Motor neuron (in vitro differentiated cells): ENCODE measurements at regions of chr1 and their contacts with region 1.

Region 1: GRCh38 chr1:175742790-175743459 is 470 bp downstream of the TNR start:
- ATAC-seq: peak; percentile 69 to 91 (median 89)
- H3K4me3 ChIP-seq: peak overlapping the region; percentile 11 to 38 (median 28)
- H3K27ac ChIP-seq: no peak overlapping the region
- H3K4me1 ChIP-seq: peaks cover 7 to 8% of the 10 kb centered on the region in 2 donors

Region 2: GRCh38 chr1:175481126-175482066 is 261.5 kb before region 1 on chr1:
- in situ Hi-C with region 1: loop called in 1 of 9 experiments (anchors 25 kb)
- ATAC-seq: peak in 4 of 8 experiments; percentile 32 to 58 (median 48)
- H3K4me3 ChIP-seq: no peak overlapping the region
- H3K27ac ChIP-seq: no peak overlapping the region
- H3K4me1 ChIP-seq: peaks cover 0 to 23% of the 10 kb centered on the region in 2 donors